Activated CD8-positive, alpha-beta T cell treated with anti-CD3 and anti-CD28 coated beads, Interleukin-2, amount 10 ng/mL, durations not matched to agents 7 days and 5 days (primary cell): ENCODE measurements at regions of chr6 and their contacts with region 1.

Region 1: DNA sequence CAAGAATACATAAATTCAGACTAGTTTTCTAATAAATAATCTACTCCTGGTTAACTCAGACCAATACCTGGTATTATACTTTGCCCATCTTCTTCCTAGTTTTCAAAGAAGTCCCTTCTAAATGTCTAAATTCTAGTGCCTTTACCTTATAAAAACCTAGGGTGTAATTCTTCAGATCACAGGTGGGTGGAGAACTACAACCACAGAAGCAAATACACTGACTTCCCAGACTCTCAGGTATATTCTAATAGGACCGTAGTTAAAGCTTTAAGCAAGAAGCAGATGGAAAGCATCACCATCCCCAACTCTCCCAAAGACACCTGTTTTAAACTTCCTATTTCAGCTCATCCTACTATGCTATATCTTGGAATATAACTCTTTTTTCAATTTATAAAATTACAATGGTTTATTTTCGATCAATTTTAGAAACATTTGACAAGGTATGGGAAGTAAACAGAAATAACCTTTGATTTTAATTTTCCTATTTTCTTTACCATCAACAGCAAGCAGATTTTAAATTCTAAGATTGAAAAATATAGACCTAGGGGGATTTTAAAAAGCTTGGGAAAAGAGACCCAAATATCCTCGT is 15.8 kb downstream of the MAN1A1 start:
- DNase-seq: no peak
- ATAC-seq: peak; percentile 60
- H3K4me3 Mint-ChIP-seq: no peak overlapping the region
- H3K27ac Mint-ChIP-seq: no peak overlapping the region
- H3K4me1 Mint-ChIP-seq: peaks cover 46% of the 10 kb centered on the region
- H3K27me3 Mint-ChIP-seq: no peaks in the 10 kb centered on the region

Region 2: GRCh38 chr6:119129148-119129967 is 204.4 kb before region 1 on chr6:
- CTCF ChIA-PET with region 1: interaction called, 11 read pairs
- POLR2A ChIA-PET with region 1: no interaction called
- DNase-seq: peak; percentile 53
- ATAC-seq: peak; percentile 86
- H3K4me3 Mint-ChIP-seq: no peak overlapping the region
- H3K27ac Mint-ChIP-seq: no peak overlapping the region
- H3K4me1 Mint-ChIP-seq: peaks cover 6% of the 10 kb centered on the region
- H3K27me3 Mint-ChIP-seq: peaks cover 10% of the 10 kb centered on the region

Region 3: GRCh38 chr6:119147101-119148053 is 186.4 kb before region 1 on chr6:
- CTCF ChIA-PET with region 1: interaction called, 15 read pairs
- POLR2A ChIA-PET with region 1: no interaction called
- DNase-seq: peak; percentile 60
- ATAC-seq: peak; percentile 81
- H3K4me3 Mint-ChIP-seq: no peak overlapping the region
- H3K27ac Mint-ChIP-seq: peak overlapping the region; percentile 75
- H3K4me1 Mint-ChIP-seq: peaks cover 50% of the 10 kb centered on the region
- H3K27me3 Mint-ChIP-seq: peaks cover 6% of the 10 kb centered on the region

Region 4: GRCh38 chr6:119313937-119314884 is 19.6 kb before region 1 on chr6:
- CTCF ChIA-PET with region 1: interaction called, 16 read pairs
- POLR2A ChIA-PET with region 1: interaction called, 4 read pairs
- DNase-seq: peak; percentile 78
- ATAC-seq: peak; percentile 76
- H3K4me3 Mint-ChIP-seq: peak overlapping the region; percentile 56
- H3K27ac Mint-ChIP-seq: peak overlapping the region; percentile 93
- H3K4me1 Mint-ChIP-seq: peaks cover 77% of the 10 kb centered on the region
- H3K27me3 Mint-ChIP-seq: no peaks in the 10 kb centered on the region

Region 5: GRCh38 chr6:119322715-119323350 is 11.0 kb before region 1 on chr6:
- CTCF ChIA-PET with region 1: interaction called, 17 read pairs
- POLR2A ChIA-PET with region 1: no interaction called
- DNase-seq: peak; percentile 80
- ATAC-seq: peak; percentile 96
- H3K4me3 Mint-ChIP-seq: peak overlapping the region; percentile 34
- H3K27ac Mint-ChIP-seq: peak overlapping the region; percentile 72
- H3K4me1 Mint-ChIP-seq: peaks cover 50% of the 10 kb centered on the region
- H3K27me3 Mint-ChIP-seq: no peaks in the 10 kb centered on the region

Region 6: DNA sequence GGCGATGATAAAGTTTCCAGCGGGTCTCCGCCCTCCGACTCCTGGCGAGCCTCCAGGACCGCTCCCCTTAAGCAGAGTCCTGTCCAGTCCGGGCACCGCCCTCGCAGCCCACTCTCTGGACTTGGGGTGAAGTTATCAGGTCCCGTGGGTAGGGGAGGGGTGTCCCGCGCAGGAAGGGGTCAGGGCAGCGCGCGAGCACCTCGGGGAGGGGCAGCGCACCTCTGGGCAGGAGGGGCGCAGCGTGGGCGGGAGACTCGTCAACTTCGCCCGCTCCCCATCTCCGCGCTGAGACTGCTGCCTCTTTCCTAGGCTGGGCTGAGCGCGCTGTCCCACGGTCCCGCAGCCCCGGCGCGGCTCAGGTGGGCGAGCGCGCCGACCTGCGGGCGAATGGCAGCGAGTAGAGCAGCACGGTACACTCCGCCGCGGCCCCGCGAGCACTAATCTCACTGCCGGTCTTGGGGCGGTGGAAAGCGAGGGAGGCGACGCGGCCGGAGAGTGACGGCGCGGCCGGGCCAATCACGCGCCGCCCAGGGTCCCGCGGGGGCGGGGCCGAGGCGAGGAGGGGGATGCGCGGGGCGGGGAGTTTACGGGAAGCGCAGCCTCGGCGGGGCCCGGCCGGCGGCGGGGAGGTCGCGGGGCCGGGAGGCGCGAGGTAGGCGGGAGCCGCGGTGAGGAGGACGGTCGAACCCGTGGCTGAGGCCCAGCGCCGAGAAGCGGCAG is 15.7 kb after region 1 on chr6 and contains the start of gene MAN1A1:
- CTCF ChIA-PET with region 1: interaction called, 48 read pairs
- POLR2A ChIA-PET with region 1: interaction called, 7 read pairs
- DNase-seq: peak; percentile 91
- ATAC-seq: peak; percentile 91
- H3K4me3 Mint-ChIP-seq: peak within 1 kb of the TSS; percentile 76
- H3K27ac Mint-ChIP-seq: peak within 1 kb of the TSS; percentile 82
- H3K4me1 Mint-ChIP-seq: peaks cover 48% of the 10 kb centered on the region
- H3K27me3 Mint-ChIP-seq: no peaks in the 10 kb centered on the region
- total RNA-seq, gene MAN1A1: 13.7 to 13.9 TPM